MCF 10A (cell line): ENCODE measurements at regions of chr20 and their contacts with region 1.

Region 1: DNA sequence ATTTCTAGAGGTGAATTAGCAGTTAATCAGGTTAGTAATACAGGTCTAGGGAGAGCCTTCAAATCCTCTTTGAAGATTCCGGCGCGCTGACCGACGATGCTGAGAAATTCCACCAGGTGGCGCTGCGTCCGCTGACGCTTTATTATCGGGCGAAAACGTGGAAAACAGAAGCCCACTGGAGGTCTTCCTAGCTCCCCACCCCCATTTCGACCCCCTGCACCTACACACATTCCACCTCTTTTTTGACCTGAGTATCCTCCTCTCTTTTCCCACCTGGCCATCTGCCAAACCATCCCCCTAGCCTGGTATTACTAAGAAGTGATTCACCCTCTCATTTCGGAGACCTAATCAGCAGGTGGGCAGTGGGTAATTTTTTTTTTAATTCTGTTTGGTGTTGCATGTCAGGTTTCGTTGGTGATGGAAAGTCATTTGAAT is 65.4 kb upstream of the RIN2 start:
- DNase-seq: peak; percentile 58
- H3K4me3 Mint-ChIP-seq: no peak overlapping the region
- H3K27ac Mint-ChIP-seq: peak overlapping the region; percentile 39
- H3K4me1 Mint-ChIP-seq: peaks cover 23% of the 10 kb centered on the region
- H3K27me3 Mint-ChIP-seq: no peaks in the 10 kb centered on the region
- CTCF ChIP-seq: peak; percentile 92

Region 2: GRCh38 chr20:19495905-19496703 is 196.6 kb before region 1 on chr20:
- CTCF ChIA-PET with region 1: no interaction called
- POLR2A ChIA-PET with region 1: no interaction called
- intact Hi-C with region 1: no loop called
- DNase-seq: no peak
- H3K4me3 Mint-ChIP-seq: no peak overlapping the region
- H3K27ac Mint-ChIP-seq: no peak overlapping the region
- H3K4me1 Mint-ChIP-seq: no peaks in the 10 kb centered on the region
- H3K27me3 Mint-ChIP-seq: no peaks in the 10 kb centered on the region
- CTCF ChIP-seq: no peak

Region 3: GRCh38 chr20:19706463-19706862 is 13.8 kb after region 1 on chr20:
- CTCF ChIA-PET with region 1: interaction called, 15 read pairs
- POLR2A ChIA-PET with region 1: interaction called, 5 read pairs
- intact Hi-C with region 1: no loop called
- DNase-seq: no peak
- H3K4me3 Mint-ChIP-seq: no peak overlapping the region
- H3K27ac Mint-ChIP-seq: no peak overlapping the region
- H3K4me1 Mint-ChIP-seq: no peaks in the 10 kb centered on the region
- H3K27me3 Mint-ChIP-seq: peaks cover 7% of the 10 kb centered on the region
- CTCF ChIP-seq: no peak

Region 4: GRCh38 chr20:19742974-19743639 is 50.4 kb after region 1 on chr20:
- CTCF ChIA-PET with region 1: interaction called, 29 read pairs
- POLR2A ChIA-PET with region 1: interaction called, 4 read pairs
- intact Hi-C with region 1: no loop called
- DNase-seq: no peak
- H3K4me3 Mint-ChIP-seq: no peak overlapping the region
- H3K27ac Mint-ChIP-seq: no peak overlapping the region
- H3K4me1 Mint-ChIP-seq: peaks cover 5% of the 10 kb centered on the region
- H3K27me3 Mint-ChIP-seq: no peaks in the 10 kb centered on the region
- CTCF ChIP-seq: no peak

Region 5: DNA sequence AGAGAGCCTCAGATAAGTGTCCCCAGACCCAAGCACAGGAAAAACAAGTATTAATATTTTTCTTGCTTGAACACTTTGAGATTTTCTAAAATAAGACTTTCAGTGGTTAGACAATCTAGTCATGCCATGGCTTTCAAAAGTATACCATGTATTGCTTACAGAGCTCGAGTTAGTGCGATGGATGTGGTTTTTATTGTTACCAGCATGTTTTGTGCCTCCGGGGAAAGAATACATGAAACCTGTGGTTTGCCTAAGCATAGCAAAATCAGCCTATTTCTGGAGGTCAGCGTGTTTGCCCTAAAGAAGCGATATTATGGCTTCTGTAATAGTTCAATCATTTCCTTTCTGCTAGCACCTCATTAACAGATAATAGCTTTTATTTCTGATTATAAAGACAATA is 86.9 kb after region 1 on chr20:
- CTCF ChIA-PET with region 1: interaction called, 39 read pairs
- POLR2A ChIA-PET with region 1: interaction called, 9 read pairs
- intact Hi-C with region 1: no loop called
- DNase-seq: no peak
- H3K4me3 Mint-ChIP-seq: no peak overlapping the region
- H3K27ac Mint-ChIP-seq: no peak overlapping the region
- H3K4me1 Mint-ChIP-seq: peaks cover 39% of the 10 kb centered on the region
- H3K27me3 Mint-ChIP-seq: no peaks in the 10 kb centered on the region
- CTCF ChIP-seq: no peak

Region 6: DNA sequence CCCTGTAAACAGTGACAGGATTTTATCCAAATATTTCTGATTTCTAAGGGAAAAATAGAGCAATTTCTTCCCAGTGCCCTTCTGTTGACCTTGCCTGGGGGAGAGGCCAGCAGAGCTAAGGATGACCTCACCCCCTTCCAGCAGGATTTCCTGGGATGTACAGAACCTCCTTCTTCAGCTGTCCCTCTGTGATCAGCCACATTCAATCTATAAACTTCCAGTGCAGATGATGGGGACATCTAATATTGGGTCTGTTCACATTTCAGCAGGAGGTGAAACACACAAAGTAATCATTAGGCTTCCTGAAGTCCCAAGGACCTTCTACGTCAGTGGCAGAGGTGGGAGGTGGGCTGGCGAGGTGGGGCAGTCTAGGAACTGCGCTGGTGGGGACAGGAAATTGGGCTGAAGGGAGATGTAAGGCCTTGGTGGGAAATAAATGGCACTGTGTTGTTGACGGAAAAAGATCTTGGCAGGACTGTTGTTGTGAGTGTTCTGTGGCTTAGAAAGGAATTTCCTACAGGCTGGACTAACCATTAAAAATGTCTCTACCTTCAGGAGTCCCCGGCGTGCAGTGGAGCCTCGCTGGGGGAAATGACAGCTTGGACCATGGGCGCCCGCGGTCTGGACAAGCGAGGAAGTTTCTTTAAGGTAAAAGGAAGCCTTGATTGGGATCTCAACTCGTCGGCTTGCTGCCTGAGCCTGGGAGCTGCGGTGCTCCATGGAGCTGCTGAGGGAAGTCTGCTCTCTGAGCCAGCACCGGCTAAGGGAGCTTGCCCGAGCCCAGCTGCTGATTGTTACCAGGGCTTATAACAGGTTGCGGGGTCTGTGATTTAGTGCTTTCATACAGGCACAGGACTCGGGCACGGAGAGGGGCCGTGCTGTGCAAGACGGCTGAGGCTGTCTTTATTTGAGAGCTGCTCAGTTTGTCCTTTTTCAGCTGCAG is 196.6 kb after region 1 on chr20:
- CTCF ChIA-PET with region 1: interaction called, 26 read pairs
- POLR2A ChIA-PET with region 1: interaction called, 4 read pairs
- intact Hi-C with region 1: loop called (anchors 1 kb)
- DNase-seq: peak; percentile 48
- H3K4me3 Mint-ChIP-seq: peak overlapping the region; percentile 60
- H3K27ac Mint-ChIP-seq: peak overlapping the region; percentile 94
- H3K4me1 Mint-ChIP-seq: peaks cover 48% of the 10 kb centered on the region
- H3K27me3 Mint-ChIP-seq: no peaks in the 10 kb centered on the region
- CTCF ChIP-seq: no peak

Region 7: GRCh38 chr20:19995220-19995863 is 302.6 kb after region 1 on chr20:
- CTCF ChIA-PET with region 1: interaction called, 26 read pairs
- POLR2A ChIA-PET with region 1: interaction called, 7 read pairs
- intact Hi-C with region 1: loop called (anchors 1 kb)
- DNase-seq: peak; percentile 70
- H3K4me3 Mint-ChIP-seq: no peak overlapping the region
- H3K27ac Mint-ChIP-seq: peak overlapping the region; percentile 86
- H3K4me1 Mint-ChIP-seq: peaks cover 28% of the 10 kb centered on the region
- H3K27me3 Mint-ChIP-seq: no peaks in the 10 kb centered on the region
- CTCF ChIP-seq: peak; percentile 78